Naive thymus-derived CD4-positive, alpha-beta T cell (primary cell): ENCODE measurements at regions of chr14 and their contacts with region 1.

Region 1: GRCh38 chr14:56117765-56118610 is at the start of gene PELI2:
- DNase-seq: peak; percentile 77 to 91 (median 88)
- ATAC-seq: peak; percentile 90
- H3K4me3 ChIP-seq: peak within 1 kb of the TSS; percentile 83
- H3K4me3 Mint-ChIP-seq: peak within 1 kb of the TSS; percentile 84 to 97 (median 94)
- H3K27ac ChIP-seq: peak within 1 kb of the TSS; percentile 83
- H3K27ac Mint-ChIP-seq: peak within 1 kb of the TSS; percentile 82 to 99 (median 98)
- H3K4me1 ChIP-seq: peaks cover 14 to 32% of the 10 kb centered on the region in 2 donors
- H3K4me1 Mint-ChIP-seq: peaks cover 29 to 64% (median 57%) of the 10 kb centered on the region in 7 donors
- H3K27me3 ChIP-seq: peaks cover 0 to 4% of the 10 kb centered on the region in 2 donors
- H3K27me3 Mint-ChIP-seq: peaks cover 0 to 59% (median 0%) of the 10 kb centered on the region in 5 donors
- total RNA-seq, gene PELI2: 6.2 to 24.7 (median 11.5) TPM

Region 2: GRCh38 chr14:54440873-54441868 is 1676.8 kb before region 1 on chr14 and contains the start of gene CNIH1:
- CTCF ChIA-PET with region 1: no interaction called
- POLR2A ChIA-PET with region 1: no interaction called
- intact Hi-C with region 1: loop called in 1 of 2 experiments (anchors 2 kb)
- DNase-seq: peak; percentile 85 to 99 (median 93)
- ATAC-seq: peak; percentile 97
- H3K4me3 ChIP-seq: peak within 1 kb of the TSS; percentile 73
- H3K4me3 Mint-ChIP-seq: peak within 1 kb of the TSS; percentile 85 to 97 (median 94)
- H3K27ac ChIP-seq: peak within 1 kb of the TSS; percentile 80
- H3K27ac Mint-ChIP-seq: peak within 1 kb of the TSS; percentile 87 to 98 (median 95)
- H3K4me1 ChIP-seq: peaks cover 9 to 23% of the 10 kb centered on the region in 2 donors
- H3K4me1 Mint-ChIP-seq: peaks cover 23 to 54% (median 49%) of the 10 kb centered on the region in 7 donors
- H3K27me3 ChIP-seq: no peaks in the 10 kb centered on the region
- H3K27me3 Mint-ChIP-seq: peaks cover 0 to 2% (median 0%) of the 10 kb centered on the region in 5 donors
- total RNA-seq, gene CNIH1: 50.5 to 87.9 (median 57.8) TPM

Region 3: DNA sequence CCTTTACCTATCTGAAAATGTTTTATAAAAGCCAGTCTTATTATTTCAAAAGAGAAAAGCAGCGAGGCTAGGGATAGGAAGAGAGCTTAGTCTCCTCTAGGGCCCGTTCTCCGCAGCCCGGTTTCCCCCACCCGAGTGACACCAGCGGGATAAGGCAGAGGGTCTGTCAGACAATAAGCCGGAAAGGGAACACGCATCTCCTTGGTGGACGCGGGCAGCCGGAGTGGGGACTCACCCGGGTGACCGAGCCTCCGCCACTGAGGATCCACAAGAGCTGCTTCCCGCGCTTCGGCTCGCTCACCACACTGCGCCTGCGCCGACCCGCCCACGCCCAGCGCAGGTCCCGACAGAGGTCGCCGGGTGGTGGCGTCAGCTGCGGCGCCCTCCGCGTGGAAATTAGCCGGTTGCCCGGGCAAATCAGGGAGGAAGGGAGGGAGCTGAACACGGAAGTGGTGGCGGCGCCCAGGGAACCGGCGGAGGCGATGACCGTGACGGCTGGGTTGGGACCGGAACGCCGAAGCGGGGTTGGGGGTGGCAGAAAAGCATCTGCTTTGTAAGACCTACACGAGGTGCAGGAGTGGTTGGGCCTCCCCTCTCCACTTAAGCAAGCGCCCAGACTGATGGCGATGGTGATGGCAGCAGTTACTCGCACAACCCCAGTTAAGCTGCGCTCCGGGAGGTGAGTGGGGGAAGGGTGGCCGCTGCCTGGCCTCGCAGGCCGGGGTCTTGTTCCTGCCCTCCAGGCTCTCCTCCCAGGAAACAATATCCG is 1091.0 kb before region 1 on chr14 and contains the starts of genes SOCS4 and WDHD1:
- CTCF ChIA-PET with region 1: no interaction called
- POLR2A ChIA-PET with region 1: no interaction called
- intact Hi-C with region 1: loop called in 1 of 2 experiments (anchors 10 kb)
- DNase-seq: peak; percentile 93 to 100 (median 96)
- ATAC-seq: peak; percentile 97
- H3K4me3 ChIP-seq: peak within 1 kb of the TSS; percentile 87
- H3K4me3 Mint-ChIP-seq: peak within 1 kb of the TSS; percentile 84 to 96 (median 93)
- H3K27ac ChIP-seq: peak within 1 kb of the TSS; percentile 86
- H3K27ac Mint-ChIP-seq: peak within 1 kb of the TSS; percentile 68 to 96 (median 92)
- H3K4me1 ChIP-seq: peaks cover 12 to 31% of the 10 kb centered on the region in 2 donors
- H3K4me1 Mint-ChIP-seq: peaks cover 26 to 59% (median 53%) of the 10 kb centered on the region in 7 donors
- H3K27me3 ChIP-seq: no peaks in the 10 kb centered on the region
- H3K27me3 Mint-ChIP-seq: no peaks in the 10 kb centered on the region
- total RNA-seq, gene SOCS4: 21.2 to 30.3 (median 22.1) TPM
- total RNA-seq, gene WDHD1: 2.6 to 26.6 (median 3.6) TPM

Region 4: DNA sequence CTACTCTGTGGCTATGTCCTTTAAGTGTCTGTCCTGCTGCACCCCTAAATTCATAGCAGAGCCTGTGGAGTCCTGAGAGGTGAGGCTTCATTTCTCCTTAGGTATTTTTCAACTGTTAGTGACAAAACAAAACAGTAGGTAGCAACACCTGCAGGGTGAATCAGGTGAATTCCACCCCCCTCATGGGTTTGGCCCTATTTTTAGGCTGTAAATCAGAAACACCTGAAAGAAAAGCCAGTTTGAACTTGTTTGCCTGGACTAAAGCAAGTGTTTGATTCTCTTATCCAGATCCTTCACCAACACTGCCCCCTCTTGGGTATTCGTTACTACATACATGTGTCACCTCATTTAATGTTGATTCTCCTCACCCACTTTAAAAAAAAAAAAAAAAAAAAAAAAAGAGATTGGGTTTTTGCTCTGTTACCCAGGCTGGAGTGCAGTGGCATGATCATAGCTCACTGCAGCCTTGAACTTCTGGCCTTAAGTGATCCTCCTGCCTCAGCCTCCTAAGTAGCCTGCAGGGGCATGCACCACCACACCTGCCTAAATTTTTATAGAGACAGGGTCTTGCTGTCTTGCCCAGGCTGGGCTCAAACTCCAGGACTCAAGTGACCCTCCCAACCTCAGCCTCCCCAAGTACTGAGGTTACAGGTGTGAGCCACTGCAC is 687.8 kb before region 1 on chr14:
- CTCF ChIA-PET with region 1: no interaction called
- POLR2A ChIA-PET with region 1: interaction called, 3 read pairs
- intact Hi-C with region 1: loop called in 1 of 2 experiments (anchors 5 kb)
- DNase-seq: peak in 7 of 9 donors; percentile 65 to 83 (median 77)
- ATAC-seq: peak; percentile 94
- H3K4me3 ChIP-seq: no peak overlapping the region
- H3K4me3 Mint-ChIP-seq: no peak overlapping the region
- H3K27ac ChIP-seq: peak overlapping the region; percentile 10
- H3K27ac Mint-ChIP-seq: peak overlapping the region in 8 of 9 donors; percentile 2 to 93 (median 70)
- H3K4me1 ChIP-seq: peaks cover 15 to 32% of the 10 kb centered on the region in 2 donors
- H3K4me1 Mint-ChIP-seq: peaks cover 18 to 48% (median 39%) of the 10 kb centered on the region in 7 donors
- H3K27me3 ChIP-seq: no peaks in the 10 kb centered on the region
- H3K27me3 Mint-ChIP-seq: no peaks in the 10 kb centered on the region

Region 5: DNA sequence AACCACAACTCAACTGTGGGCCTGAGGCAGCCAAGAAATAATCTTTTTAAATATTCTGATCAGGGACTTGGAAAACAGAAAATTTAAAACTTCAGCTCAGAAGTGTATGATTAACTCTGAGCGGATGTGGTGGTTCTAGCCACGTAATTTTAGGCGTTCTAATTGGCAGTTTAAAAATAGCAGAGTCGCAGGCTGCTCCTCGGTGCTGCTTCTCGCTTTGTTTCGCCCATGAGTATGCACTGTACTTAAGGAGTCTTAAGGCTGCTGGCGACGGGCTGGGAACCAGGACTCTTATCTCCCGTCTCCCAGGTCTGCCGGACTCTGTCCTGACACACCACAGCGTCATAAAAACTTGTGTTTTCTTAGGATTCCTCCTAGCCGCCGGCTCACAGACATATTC is 113.2 kb before region 1 on chr14:
- CTCF ChIA-PET with region 1: no interaction called
- POLR2A ChIA-PET with region 1: no interaction called
- intact Hi-C with region 1: loop called (anchors 1 to 2 kb)
- DNase-seq: peak in 7 of 9 donors; percentile 24 to 64 (median 41)
- ATAC-seq: peak; percentile 43
- H3K4me3 ChIP-seq: no peak overlapping the region
- H3K4me3 Mint-ChIP-seq: peak overlapping the region; percentile 19 to 77 (median 58)
- H3K27ac ChIP-seq: no peak overlapping the region
- H3K27ac Mint-ChIP-seq: peak overlapping the region in 2 of 9 donors; percentile 58 to 63
- H3K4me1 ChIP-seq: peaks cover 26% of the 10 kb centered on the region in 2 donors
- H3K4me1 Mint-ChIP-seq: peaks cover 26 to 45% (median 32%) of the 10 kb centered on the region in 7 donors
- H3K27me3 ChIP-seq: peaks cover 0 to 18% of the 10 kb centered on the region in 2 donors
- H3K27me3 Mint-ChIP-seq: peaks cover 46 to 82% (median 54%) of the 10 kb centered on the region in 5 donors

Region 6: GRCh38 chr14:56339855-56340701 is 222.1 kb after region 1 on chr14:
- CTCF ChIA-PET with region 1: no interaction called
- POLR2A ChIA-PET with region 1: no interaction called
- intact Hi-C with region 1: loop called in 1 of 2 experiments (anchors 5 kb)
- DNase-seq: peak; percentile 14 to 57 (median 46)
- ATAC-seq: peak; percentile 91
- H3K4me3 ChIP-seq: no peak overlapping the region
- H3K4me3 Mint-ChIP-seq: peak overlapping the region in 1 of 10 donors; percentile 20
- H3K27ac ChIP-seq: no peak overlapping the region
- H3K27ac Mint-ChIP-seq: peak overlapping the region in 1 of 9 donors; percentile 16
- H3K4me1 ChIP-seq: no peaks in the 10 kb centered on the region
- H3K4me1 Mint-ChIP-seq: peaks cover 0 to 14% (median 0%) of the 10 kb centered on the region in 7 donors
- H3K27me3 ChIP-seq: no peaks in the 10 kb centered on the region
- H3K27me3 Mint-ChIP-seq: no peaks in the 10 kb centered on the region